ENCODE measurements at regions of chr10 and their contacts with region 1.

Region 1: DNA sequence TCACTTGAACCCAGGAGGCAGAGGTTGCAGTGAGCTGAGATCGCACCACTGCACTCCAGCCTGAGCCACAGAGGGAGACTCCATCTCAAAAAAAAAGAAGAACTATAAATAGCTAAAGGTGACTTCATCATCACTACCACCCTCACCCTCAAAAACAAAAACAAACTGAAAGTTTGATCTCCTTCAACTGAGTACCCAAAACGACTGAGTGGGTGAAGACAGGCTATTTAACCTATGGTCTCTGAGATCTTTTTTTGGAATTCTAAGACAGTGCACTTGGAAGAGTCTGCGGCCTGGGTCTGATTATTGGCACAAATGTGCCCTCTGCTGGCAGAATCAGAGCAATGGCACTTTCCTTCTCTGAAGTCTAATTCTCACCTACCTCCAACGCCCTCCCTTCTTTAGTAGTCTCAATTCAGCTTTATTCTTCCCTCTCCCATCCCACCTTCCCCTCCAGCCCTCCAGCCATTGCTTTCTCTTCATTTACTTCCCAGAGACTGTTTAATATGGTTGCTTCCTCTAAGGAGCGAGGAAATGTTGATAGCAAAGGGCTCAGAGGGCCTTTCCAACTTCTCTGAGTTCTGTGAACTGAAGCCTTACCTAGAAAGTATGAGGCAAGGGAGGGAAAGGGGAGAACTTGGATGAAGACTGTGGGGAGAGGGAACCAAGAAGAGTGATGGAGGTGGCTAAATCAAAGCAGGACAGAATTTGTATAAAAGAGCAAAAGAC is 2.9 kb upstream of the MYOZ1 start:
- DNase-seq: peak; percentile 27 to 70 (median 54)
- H3K4me3 ChIP-seq: no peak overlapping the region
- H3K4me3 Mint-ChIP-seq: peak overlapping the region in 3 of 7 donors; percentile 3 to 59 (median 41)
- H3K27ac ChIP-seq: no peak overlapping the region
- H3K27ac Mint-ChIP-seq: peak overlapping the region in 3 of 8 donors; percentile 26 to 53 (median 42)
- H3K4me1 ChIP-seq: no peaks in the 10 kb centered on the region
- H3K4me1 Mint-ChIP-seq: peaks cover 3 to 9% (median 6%) of the 10 kb centered on the region in 3 donors
- H3K27me3 ChIP-seq: no peaks in the 10 kb centered on the region
- H3K27me3 Mint-ChIP-seq: peaks cover 9 to 16% of the 10 kb centered on the region in 2 donors

Region 2: DNA sequence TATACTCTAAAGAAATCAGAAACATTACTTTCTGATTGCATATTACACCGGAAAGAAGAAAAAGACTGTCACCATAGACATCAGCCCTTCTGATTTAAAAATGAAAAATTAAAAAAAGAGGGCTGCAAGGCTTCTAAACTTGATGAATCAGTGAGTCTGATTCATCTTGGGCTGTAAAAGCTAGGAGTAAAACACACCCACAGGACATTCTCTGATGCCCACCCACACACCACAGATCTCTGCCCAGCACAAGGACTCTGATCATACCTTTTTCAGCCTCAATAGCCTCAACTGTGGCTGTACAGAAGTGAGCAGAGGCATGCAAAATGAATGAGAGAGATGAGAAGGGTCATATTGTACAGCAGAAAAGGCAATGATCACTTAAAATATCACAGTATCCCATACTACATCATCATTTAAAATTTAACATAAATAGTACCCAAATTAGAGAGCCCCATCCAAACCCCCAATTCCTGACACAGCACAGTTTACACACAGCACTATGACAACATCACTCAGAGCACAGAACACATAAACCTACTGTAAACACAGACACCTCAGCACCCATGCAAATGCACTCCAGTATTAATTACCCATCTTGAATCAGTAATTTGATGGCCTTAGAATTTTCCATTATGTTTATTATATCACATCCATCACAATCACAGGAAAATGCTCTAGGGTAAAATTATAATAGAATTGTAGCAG is 204.4 kb before region 1 on chr10:
- CTCF ChIA-PET with region 1: no interaction called
- POLR2A ChIA-PET with region 1: no interaction called
- DNase-seq: no peak
- H3K4me3 ChIP-seq: no peak overlapping the region
- H3K4me3 Mint-ChIP-seq: no peak overlapping the region
- H3K27ac ChIP-seq: no peak overlapping the region
- H3K27ac Mint-ChIP-seq: peak overlapping the region in 4 of 8 donors; percentile 59 to 84 (median 66)
- H3K4me1 ChIP-seq: no peaks in the 10 kb centered on the region
- H3K4me1 Mint-ChIP-seq: peaks cover 4 to 17% (median 5%) of the 10 kb centered on the region in 3 donors
- H3K27me3 ChIP-seq: no peaks in the 10 kb centered on the region
- H3K27me3 Mint-ChIP-seq: no peaks in the 10 kb centered on the region

Region 3: GRCh38 chr10:73529089-73529832 is 114.9 kb before region 1 on chr10:
- CTCF ChIA-PET with region 1: interaction called, 150 read pairs
- POLR2A ChIA-PET with region 1: no interaction called
- DNase-seq: peak; percentile 19 to 65 (median 63)
- H3K4me3 ChIP-seq: no peak overlapping the region
- H3K4me3 Mint-ChIP-seq: no peak overlapping the region
- H3K27ac ChIP-seq: no peak overlapping the region
- H3K27ac Mint-ChIP-seq: no peak overlapping the region
- H3K4me1 ChIP-seq: no peaks in the 10 kb centered on the region
- H3K4me1 Mint-ChIP-seq: no peaks in the 10 kb centered on the region
- H3K27me3 ChIP-seq: no peaks in the 10 kb centered on the region
- H3K27me3 Mint-ChIP-seq: peaks cover 0 to 2% of the 10 kb centered on the region in 2 donors

Region 4: DNA sequence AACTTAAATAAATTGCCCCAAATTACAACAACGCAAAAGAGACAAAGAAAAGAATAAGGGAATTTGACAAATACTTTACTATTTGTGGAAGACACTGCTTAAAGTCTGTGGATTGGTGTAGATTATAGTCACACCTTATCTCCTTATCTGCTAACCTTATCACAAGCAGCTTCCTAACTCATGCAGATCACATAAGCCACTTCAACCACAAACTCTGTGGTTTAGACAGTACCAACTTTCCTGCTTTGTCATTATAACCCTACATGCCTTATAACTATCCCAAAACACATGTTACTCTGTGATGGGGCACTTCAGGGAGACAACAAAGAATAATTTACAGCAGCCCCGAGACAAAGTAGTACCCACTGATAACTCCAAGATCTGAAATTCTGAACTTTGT is 106.9 kb before region 1 on chr10:
- CTCF ChIA-PET with region 1: interaction called, 150 read pairs
- POLR2A ChIA-PET with region 1: no interaction called
- DNase-seq: no peak
- H3K4me3 ChIP-seq: no peak overlapping the region
- H3K4me3 Mint-ChIP-seq: no peak overlapping the region
- H3K27ac ChIP-seq: no peak overlapping the region
- H3K27ac Mint-ChIP-seq: peak overlapping the region in 1 of 8 donors; percentile 11
- H3K4me1 ChIP-seq: peaks cover 11% of the 10 kb centered on the region
- H3K4me1 Mint-ChIP-seq: peaks cover 12 to 16% (median 12%) of the 10 kb centered on the region in 3 donors
- H3K27me3 ChIP-seq: no peaks in the 10 kb centered on the region
- H3K27me3 Mint-ChIP-seq: no peaks in the 10 kb centered on the region

Measured in CD8-positive, alpha-beta memory T cell (primary cell).